CD8-positive, alpha-beta T cell (primary cell): ENCODE measurements at regions of chr2 and their contacts with region 1.

Region 1: GRCh38 chr2:105037572-105038382 is at the start of gene MRPS9:
- DNase-seq: peak; percentile 96 to 99 (median 98)
- ATAC-seq: peak; percentile 97
- H3K4me3 ChIP-seq: peak within 1 kb of the TSS; percentile 80 to 93
- H3K4me3 Mint-ChIP-seq: peak within 1 kb of the TSS; percentile 97
- H3K27ac ChIP-seq: peak within 1 kb of the TSS; percentile 72 to 74
- H3K27ac Mint-ChIP-seq: peak within 1 kb of the TSS; percentile 96
- H3K4me1 ChIP-seq: peaks cover 13% of the 10 kb centered on the region
- H3K4me1 Mint-ChIP-seq: peaks cover 53% of the 10 kb centered on the region
- H3K27me3 ChIP-seq: no peaks in the 10 kb centered on the region
- H3K27me3 Mint-ChIP-seq: no peaks in the 10 kb centered on the region
- CTCF ChIP-seq: no peak
- total RNA-seq, gene MRPS9: 9.2 to 10.4 TPM

Region 2: DNA sequence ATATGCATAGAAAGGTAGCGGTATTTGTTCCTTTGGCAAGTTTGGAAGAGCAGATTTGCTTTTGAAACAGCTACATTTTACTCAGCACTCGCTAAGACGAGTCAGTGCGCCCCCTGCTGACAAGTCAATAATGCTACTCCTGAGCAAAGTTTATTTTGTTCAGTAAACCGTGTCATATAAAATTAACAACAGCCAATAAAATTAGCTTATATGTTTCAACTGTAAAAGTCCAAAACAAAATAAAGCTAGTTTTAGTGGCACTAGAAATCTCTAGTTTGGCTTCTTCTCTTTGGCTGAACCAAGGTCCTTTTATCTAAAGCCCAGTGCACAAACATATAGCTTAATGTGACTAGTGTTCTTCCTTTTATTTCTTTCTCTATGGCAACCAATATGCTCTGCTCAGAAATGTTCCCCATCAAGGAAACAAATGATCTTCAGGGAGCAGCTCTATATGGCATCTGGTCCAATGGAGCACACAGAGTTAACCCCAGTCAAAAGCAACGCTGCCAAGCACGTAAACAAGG is 188.1 kb before region 1 on chr2:
- CTCF ChIA-PET with region 1: no interaction called
- POLR2A ChIA-PET with region 1: no interaction called
- intact Hi-C with region 1: loop called in 1 of 2 experiments (anchors 10 kb)
- DNase-seq: peak in 7 of 9 experiments; percentile 31 to 63 (median 46)
- ATAC-seq: no peak
- H3K4me3 ChIP-seq: no peak overlapping the region
- H3K4me3 Mint-ChIP-seq: no peak overlapping the region
- H3K27ac ChIP-seq: no peak overlapping the region
- H3K27ac Mint-ChIP-seq: no peak overlapping the region
- H3K4me1 ChIP-seq: peaks cover 31% of the 10 kb centered on the region
- H3K4me1 Mint-ChIP-seq: peaks cover 35% of the 10 kb centered on the region
- H3K27me3 ChIP-seq: peaks cover 41% of the 10 kb centered on the region in 2 experiments
- H3K27me3 Mint-ChIP-seq: peaks cover 84% of the 10 kb centered on the region
- CTCF ChIP-seq: peak; percentile 65

Region 3: GRCh38 chr2:104876606-104877570 is 160.9 kb before region 1 on chr2:
- CTCF ChIA-PET with region 1: no interaction called
- POLR2A ChIA-PET with region 1: no interaction called
- intact Hi-C with region 1: no loop called
- DNase-seq: no peak
- ATAC-seq: no peak
- H3K4me3 ChIP-seq: no peak overlapping the region
- H3K4me3 Mint-ChIP-seq: no peak overlapping the region
- H3K27ac ChIP-seq: no peak overlapping the region
- H3K27ac Mint-ChIP-seq: no peak overlapping the region
- H3K4me1 ChIP-seq: peaks cover 6% of the 10 kb centered on the region
- H3K4me1 Mint-ChIP-seq: peaks cover 9% of the 10 kb centered on the region
- H3K27me3 ChIP-seq: peaks cover 6 to 11% of the 10 kb centered on the region in 2 experiments
- H3K27me3 Mint-ChIP-seq: peaks cover 59% of the 10 kb centered on the region
- CTCF ChIP-seq: no peak

Region 4: GRCh38 chr2:105078950-105079349 is 41.2 kb after region 1 on chr2:
- CTCF ChIA-PET with region 1: no interaction called
- POLR2A ChIA-PET with region 1: no interaction called
- intact Hi-C with region 1: loop called in 1 of 2 experiments (anchors 5 kb)
- DNase-seq: no peak
- ATAC-seq: no peak
- H3K4me3 ChIP-seq: no peak overlapping the region
- H3K4me3 Mint-ChIP-seq: no peak overlapping the region
- H3K27ac ChIP-seq: no peak overlapping the region
- H3K27ac Mint-ChIP-seq: no peak overlapping the region
- H3K4me1 ChIP-seq: no peaks in the 10 kb centered on the region
- H3K4me1 Mint-ChIP-seq: no peaks in the 10 kb centered on the region
- H3K27me3 ChIP-seq: no peaks in the 10 kb centered on the region
- H3K27me3 Mint-ChIP-seq: no peaks in the 10 kb centered on the region
- CTCF ChIP-seq: no peak

Region 5: DNA sequence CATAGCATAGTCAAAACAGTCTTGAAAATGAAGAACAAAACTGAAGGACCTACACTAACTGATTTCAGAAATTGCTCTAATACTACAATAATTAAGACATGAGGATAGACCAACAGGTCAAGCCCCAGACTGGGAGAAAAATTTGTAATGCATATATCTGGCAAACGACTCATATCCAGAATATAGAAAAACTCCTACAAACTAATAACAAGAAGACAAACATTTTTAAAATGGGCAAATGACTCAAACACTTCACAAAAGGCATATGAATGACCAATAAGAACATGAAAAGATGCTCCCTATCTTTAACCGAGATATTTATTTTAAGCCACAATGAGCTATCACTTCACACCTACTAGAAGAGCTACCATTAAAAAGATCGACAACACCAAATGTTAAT is 277.5 kb after region 1 on chr2:
- CTCF ChIA-PET with region 1: no interaction called
- POLR2A ChIA-PET with region 1: no interaction called
- intact Hi-C with region 1: no loop called
- DNase-seq: no peak
- ATAC-seq: no peak
- H3K4me3 ChIP-seq: no peak overlapping the region
- H3K4me3 Mint-ChIP-seq: no peak overlapping the region
- H3K27ac ChIP-seq: no peak overlapping the region
- H3K27ac Mint-ChIP-seq: peak overlapping the region; percentile 12
- H3K4me1 ChIP-seq: no peaks in the 10 kb centered on the region
- H3K4me1 Mint-ChIP-seq: peaks cover 39% of the 10 kb centered on the region
- H3K27me3 ChIP-seq: no peaks in the 10 kb centered on the region
- H3K27me3 Mint-ChIP-seq: no peaks in the 10 kb centered on the region
- CTCF ChIP-seq: no peak

Region 6: DNA sequence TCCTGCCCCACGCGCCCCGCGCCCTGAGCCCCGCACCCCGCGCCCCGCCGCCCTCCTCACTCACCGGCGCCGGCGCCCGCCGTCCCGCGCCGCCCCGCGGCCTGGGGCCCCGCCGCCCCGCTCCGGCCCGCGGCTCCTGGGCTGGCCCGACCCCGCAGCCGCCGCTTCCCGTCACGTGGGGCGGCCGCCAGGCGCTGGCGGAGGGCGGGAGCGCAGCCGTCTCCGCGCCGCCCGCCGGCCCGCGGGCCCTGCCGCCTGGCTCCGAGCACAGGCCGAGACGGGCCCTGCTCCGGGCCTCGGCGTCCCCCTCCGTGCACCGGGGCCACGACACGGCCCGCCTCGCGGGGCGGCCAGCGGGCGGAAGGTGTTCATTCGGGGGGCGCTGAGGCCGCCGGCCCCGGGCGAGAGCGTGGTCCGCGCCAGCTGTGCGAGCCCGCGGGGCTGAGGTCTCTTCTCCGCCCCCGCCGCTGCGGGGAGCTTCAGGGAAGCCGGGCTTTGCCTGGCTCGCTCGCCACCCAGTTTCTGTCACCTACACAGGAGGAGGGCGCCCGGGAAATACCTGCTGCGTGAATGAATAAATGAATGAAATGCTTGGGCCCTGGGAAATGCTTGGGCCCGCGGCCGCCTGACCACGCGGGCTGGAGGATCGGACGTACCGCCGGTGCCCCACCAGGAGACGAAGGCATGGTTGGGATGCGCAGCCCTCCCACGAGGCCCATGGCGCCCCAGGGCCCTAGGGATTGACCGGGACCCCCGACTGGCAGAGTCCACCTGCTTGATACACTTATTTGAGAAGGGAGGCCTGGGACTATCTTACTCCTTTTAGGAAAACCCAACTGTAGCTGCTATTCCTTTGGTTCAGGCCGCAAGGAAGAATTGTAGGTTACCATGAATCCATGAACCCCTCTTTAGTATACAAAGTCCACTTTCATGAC is 292.1 kb after region 1 on chr2 and contains the start of gene TGFBRAP1:
- CTCF ChIA-PET with region 1: no interaction called
- POLR2A ChIA-PET with region 1: interaction called, 4 read pairs
- intact Hi-C with region 1: loop called (anchors 2 to 5 kb)
- DNase-seq: peak in 8 of 9 experiments; percentile 34 to 84 (median 56)
- ATAC-seq: peak; percentile 81
- H3K4me3 ChIP-seq: peak within 1 kb of the TSS; percentile 70 to 72
- H3K4me3 Mint-ChIP-seq: peak within 1 kb of the TSS; percentile 92
- H3K27ac ChIP-seq: peak within 1 kb of the TSS; percentile 86 to 90
- H3K27ac Mint-ChIP-seq: peak within 1 kb of the TSS; percentile 94
- H3K4me1 ChIP-seq: peaks cover 33% of the 10 kb centered on the region
- H3K4me1 Mint-ChIP-seq: peaks cover 50% of the 10 kb centered on the region
- H3K27me3 ChIP-seq: no peaks in the 10 kb centered on the region
- H3K27me3 Mint-ChIP-seq: no peaks in the 10 kb centered on the region
- CTCF ChIP-seq: no peak
- total RNA-seq, gene TGFBRAP1: 16.1 to 16.3 TPM

Region 7: GRCh38 chr2:105337124-105338019 is 299.6 kb after region 1 on chr2 and contains the start of gene C2orf49:
- CTCF ChIA-PET with region 1: no interaction called
- POLR2A ChIA-PET with region 1: no interaction called
- intact Hi-C with region 1: loop called in 1 of 2 experiments (anchors 5 kb)
- DNase-seq: peak; percentile 76 to 94 (median 90)
- ATAC-seq: peak; percentile 91
- H3K4me3 ChIP-seq: peak within 1 kb of the TSS; percentile 83 to 92
- H3K4me3 Mint-ChIP-seq: peak within 1 kb of the TSS; percentile 100
- H3K27ac ChIP-seq: peak within 1 kb of the TSS; percentile 96 to 98
- H3K27ac Mint-ChIP-seq: peak within 1 kb of the TSS; percentile 100
- H3K4me1 ChIP-seq: peaks cover 18% of the 10 kb centered on the region
- H3K4me1 Mint-ChIP-seq: peaks cover 32% of the 10 kb centered on the region
- H3K27me3 ChIP-seq: no peaks in the 10 kb centered on the region
- H3K27me3 Mint-ChIP-seq: no peaks in the 10 kb centered on the region
- CTCF ChIP-seq: no peak
- total RNA-seq, gene C2orf49: 27.8 to 28.9 TPM

Region 8: GRCh38 chr2:105604938-105605337 is 567.2 kb after region 1 on chr2:
- CTCF ChIA-PET with region 1: no interaction called
- POLR2A ChIA-PET with region 1: no interaction called
- intact Hi-C with region 1: no loop called
- DNase-seq: no peak
- ATAC-seq: no peak
- H3K4me3 ChIP-seq: no peak overlapping the region
- H3K4me3 Mint-ChIP-seq: no peak overlapping the region
- H3K27ac ChIP-seq: no peak overlapping the region
- H3K27ac Mint-ChIP-seq: no peak overlapping the region
- H3K4me1 ChIP-seq: no peaks in the 10 kb centered on the region
- H3K4me1 Mint-ChIP-seq: peaks cover 3% of the 10 kb centered on the region
- H3K27me3 ChIP-seq: no peaks in the 10 kb centered on the region
- H3K27me3 Mint-ChIP-seq: no peaks in the 10 kb centered on the region
- CTCF ChIP-seq: no peak

Region 9: DNA sequence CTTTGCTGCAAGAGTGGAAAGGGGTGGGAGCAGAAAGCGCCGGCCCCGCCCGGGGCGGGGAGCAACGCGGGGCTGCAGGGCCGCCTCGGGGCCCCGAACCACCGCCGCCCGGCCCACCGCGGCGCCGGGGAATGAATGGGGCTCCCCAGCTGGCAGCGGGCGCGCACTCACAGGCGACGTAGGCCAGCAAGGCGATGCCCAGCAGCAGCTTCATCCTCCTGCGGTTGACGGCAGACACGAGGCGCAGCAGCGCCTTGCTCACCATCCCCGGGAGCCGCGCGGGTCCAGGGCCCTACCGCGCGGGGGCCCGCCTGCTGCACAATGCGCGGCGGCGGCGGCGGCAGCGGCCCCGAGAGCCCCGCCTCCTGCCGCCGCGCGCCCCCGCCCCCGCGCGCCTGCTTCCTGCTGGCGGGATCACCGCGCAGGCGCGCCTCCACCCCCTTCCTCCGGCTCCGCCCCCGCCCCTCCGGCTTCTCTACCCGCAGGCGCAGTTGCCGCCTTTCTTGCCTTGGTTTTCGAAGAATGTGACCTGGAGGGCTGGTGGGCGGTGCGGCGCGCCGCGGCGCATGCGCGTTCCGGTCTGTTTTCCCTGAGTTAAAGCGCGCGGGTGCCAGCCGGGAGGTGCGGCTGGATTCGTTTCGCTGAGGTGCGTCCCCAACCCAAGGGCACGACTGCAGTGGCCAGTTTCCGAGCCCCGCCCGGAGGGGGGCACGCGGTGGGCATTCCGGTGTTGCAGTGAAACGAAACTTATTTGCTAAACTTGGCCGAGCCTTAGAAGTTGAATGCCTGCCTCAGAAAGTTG is 1156.4 kb after region 1 on chr2 and contains the start of gene UXS1:
- CTCF ChIA-PET with region 1: no interaction called
- POLR2A ChIA-PET with region 1: no interaction called
- intact Hi-C with region 1: loop called in 1 of 2 experiments (anchors 10 kb)
- DNase-seq: peak; percentile 97 to 99 (median 98)
- ATAC-seq: peak; percentile 80
- H3K4me3 ChIP-seq: peak within 1 kb of the TSS; percentile 80 to 90
- H3K4me3 Mint-ChIP-seq: peak within 1 kb of the TSS; percentile 97
- H3K27ac ChIP-seq: peak within 1 kb of the TSS; percentile 70 to 77
- H3K27ac Mint-ChIP-seq: peak within 1 kb of the TSS; percentile 97
- H3K4me1 ChIP-seq: peaks cover 39% of the 10 kb centered on the region
- H3K4me1 Mint-ChIP-seq: peaks cover 46% of the 10 kb centered on the region
- H3K27me3 ChIP-seq: no peaks in the 10 kb centered on the region
- H3K27me3 Mint-ChIP-seq: no peaks in the 10 kb centered on the region
- CTCF ChIP-seq: no peak
- total RNA-seq, gene UXS1: 62.1 to 70.8 TPM